ENCODE measurements at regions of chr7 and their contacts with region 1.

Region 1: GRCh38 chr7:148722340-148723165 is 23.9 kb downstream of the CUL1 start:
- DNase-seq: no peak
- H3K4me3 ChIP-seq: no peak overlapping the region
- H3K27ac ChIP-seq: no peak overlapping the region
- H3K4me1 ChIP-seq: peaks cover 0 to 47% (median 19%) of the 10 kb centered on the region in 4 experiments
- H3K27me3 ChIP-seq: no peaks in the 10 kb centered on the region

Region 2: GRCh38 chr7:148701414-148701813 is 21.1 kb before region 1 on chr7:
- CTCF ChIA-PET with region 1: interaction called, 15 read pairs
- POLR2A ChIA-PET with region 1: no interaction called
- DNase-seq: no peak
- H3K4me3 ChIP-seq: peak overlapping the region in 3 of 7 experiments; percentile 86 to 90 (median 86)
- H3K27ac ChIP-seq: no peak overlapping the region
- H3K4me1 ChIP-seq: peaks cover 8 to 56% (median 36%) of the 10 kb centered on the region in 4 experiments
- H3K27me3 ChIP-seq: no peaks in the 10 kb centered on the region

Region 3: GRCh38 chr7:148708026-148708885 is 14.3 kb before region 1 on chr7:
- CTCF ChIA-PET with region 1: interaction called, 15 read pairs
- POLR2A ChIA-PET with region 1: no interaction called
- DNase-seq: peak; percentile 28 to 80 (median 66)
- H3K4me3 ChIP-seq: peak overlapping the region in 1 of 7 experiments; percentile 11
- H3K27ac ChIP-seq: no peak overlapping the region
- H3K4me1 ChIP-seq: peaks cover 10 to 56% (median 29%) of the 10 kb centered on the region in 4 experiments
- H3K27me3 ChIP-seq: no peaks in the 10 kb centered on the region